ENCODE measurements at regions of chr4 and their contacts with region 1.

Region 1: GRCh38 chr4:39977489-39978377 is at the start of gene PDS5A:
- DNase-seq: peak; percentile 76 to 96 (median 87)
- ATAC-seq: peak; percentile 83
- H3K4me3 ChIP-seq: peak within 1 kb of the TSS; percentile 76 to 77
- H3K4me3 Mint-ChIP-seq: peak within 1 kb of the TSS; percentile 90
- H3K27ac ChIP-seq: peak within 1 kb of the TSS; percentile 80 to 81
- H3K27ac Mint-ChIP-seq: peak within 1 kb of the TSS; percentile 95
- H3K4me1 ChIP-seq: peaks cover 31% of the 10 kb centered on the region
- H3K4me1 Mint-ChIP-seq: peaks cover 30% of the 10 kb centered on the region
- H3K27me3 ChIP-seq: no peaks in the 10 kb centered on the region
- H3K27me3 Mint-ChIP-seq: no peaks in the 10 kb centered on the region
- CTCF ChIP-seq: peak; percentile 79
- total RNA-seq, gene PDS5A: 75.5 to 84.0 TPM

Region 2: GRCh38 chr4:39181905-39182638 is 795.7 kb before region 1 on chr4 and contains the start of gene WDR19:
- CTCF ChIA-PET with region 1: no interaction called
- POLR2A ChIA-PET with region 1: no interaction called
- intact Hi-C with region 1: loop called in 1 of 2 experiments (anchors 10 kb)
- DNase-seq: peak; percentile 97 to 100 (median 98)
- ATAC-seq: peak; percentile 93
- H3K4me3 ChIP-seq: peak within 1 kb of the TSS; percentile 82 to 92
- H3K4me3 Mint-ChIP-seq: peak within 1 kb of the TSS; percentile 43
- H3K27ac ChIP-seq: peak within 1 kb of the TSS; percentile 56 to 63
- H3K27ac Mint-ChIP-seq: no peak within 1 kb of the TSS
- H3K4me1 ChIP-seq: peaks cover 10% of the 10 kb centered on the region
- H3K4me1 Mint-ChIP-seq: peaks cover 6% of the 10 kb centered on the region
- H3K27me3 ChIP-seq: peaks cover 0 to 2% of the 10 kb centered on the region in 2 experiments
- H3K27me3 Mint-ChIP-seq: peaks cover 4% of the 10 kb centered on the region
- CTCF ChIP-seq: peak; percentile 64
- total RNA-seq, gene WDR19: 10.8 to 11.9 TPM

Region 3: GRCh38 chr4:39469429-39470077 is 508.2 kb before region 1 on chr4:
- CTCF ChIA-PET with region 1: interaction called, 15 read pairs
- POLR2A ChIA-PET with region 1: interaction called, 3 read pairs
- intact Hi-C with region 1: loop called (anchors 1 kb)
- DNase-seq: peak in 2 of 9 experiments; percentile 55 to 72
- ATAC-seq: peak; percentile 93
- H3K4me3 ChIP-seq: no peak overlapping the region
- H3K4me3 Mint-ChIP-seq: no peak overlapping the region
- H3K27ac ChIP-seq: no peak overlapping the region
- H3K27ac Mint-ChIP-seq: no peak overlapping the region
- H3K4me1 ChIP-seq: no peaks in the 10 kb centered on the region
- H3K4me1 Mint-ChIP-seq: peaks cover 4% of the 10 kb centered on the region
- H3K27me3 ChIP-seq: no peaks in the 10 kb centered on the region
- H3K27me3 Mint-ChIP-seq: no peaks in the 10 kb centered on the region
- CTCF ChIP-seq: peak; percentile 82

Region 4: GRCh38 chr4:39697740-39698423 is 279.9 kb before region 1 on chr4 and contains the start of gene UBE2K:
- CTCF ChIA-PET with region 1: interaction called, 9 read pairs
- POLR2A ChIA-PET with region 1: interaction called, 5 read pairs
- intact Hi-C with region 1: loop called (anchors 1 kb)
- DNase-seq: peak; percentile 73 to 95 (median 87)
- ATAC-seq: peak; percentile 82
- H3K4me3 ChIP-seq: peak within 1 kb of the TSS; percentile 97 to 100
- H3K4me3 Mint-ChIP-seq: peak within 1 kb of the TSS; percentile 99
- H3K27ac ChIP-seq: peak within 1 kb of the TSS; percentile 85 to 95
- H3K27ac Mint-ChIP-seq: peak within 1 kb of the TSS; percentile 99
- H3K4me1 ChIP-seq: peaks cover 39% of the 10 kb centered on the region
- H3K4me1 Mint-ChIP-seq: peaks cover 44% of the 10 kb centered on the region
- H3K27me3 ChIP-seq: no peaks in the 10 kb centered on the region
- H3K27me3 Mint-ChIP-seq: no peaks in the 10 kb centered on the region
- CTCF ChIP-seq: no peak
- total RNA-seq, gene UBE2K: 33.1 to 35.8 TPM

Region 5: DNA sequence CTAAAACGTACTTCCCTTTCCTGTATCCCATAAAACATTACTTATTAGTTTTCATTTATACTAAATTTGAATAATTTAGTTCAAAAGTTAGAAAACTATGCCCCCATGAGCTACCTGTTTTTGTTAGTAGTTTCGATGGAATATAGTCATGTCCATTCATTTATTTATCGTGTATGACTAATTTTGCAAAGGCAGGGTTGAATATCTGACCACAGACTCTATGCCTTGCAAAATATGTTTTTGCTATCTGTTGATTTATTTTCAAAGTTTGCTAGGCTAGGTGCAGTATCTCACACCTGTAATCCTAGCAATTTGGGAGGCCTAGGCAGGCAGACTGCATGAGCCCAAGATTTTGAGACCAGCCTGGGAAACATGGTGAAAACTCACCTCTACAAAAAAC is 78.4 kb before region 1 on chr4:
- CTCF ChIA-PET with region 1: interaction called, 4 read pairs
- POLR2A ChIA-PET with region 1: no interaction called
- intact Hi-C with region 1: loop called in 1 of 2 experiments (anchors 5 kb)
- DNase-seq: no peak
- ATAC-seq: no peak
- H3K4me3 ChIP-seq: no peak overlapping the region
- H3K4me3 Mint-ChIP-seq: no peak overlapping the region
- H3K27ac ChIP-seq: no peak overlapping the region
- H3K27ac Mint-ChIP-seq: no peak overlapping the region
- H3K4me1 ChIP-seq: no peaks in the 10 kb centered on the region
- H3K4me1 Mint-ChIP-seq: no peaks in the 10 kb centered on the region
- H3K27me3 ChIP-seq: no peaks in the 10 kb centered on the region
- H3K27me3 Mint-ChIP-seq: no peaks in the 10 kb centered on the region
- CTCF ChIP-seq: no peak

Region 6: GRCh38 chr4:40199999-40200874 is 222.5 kb after region 1 on chr4:
- CTCF ChIA-PET with region 1: no interaction called
- POLR2A ChIA-PET with region 1: no interaction called
- intact Hi-C with region 1: loop called in 1 of 2 experiments (anchors 5 kb)
- DNase-seq: peak in 7 of 9 experiments; percentile 41 to 88 (median 67)
- ATAC-seq: peak; percentile 24
- H3K4me3 ChIP-seq: peak overlapping the region; percentile 83 to 87
- H3K4me3 Mint-ChIP-seq: peak overlapping the region; percentile 100
- H3K27ac ChIP-seq: peak overlapping the region; percentile 89 to 96
- H3K27ac Mint-ChIP-seq: peak overlapping the region; percentile 100
- H3K4me1 ChIP-seq: peaks cover 25% of the 10 kb centered on the region
- H3K4me1 Mint-ChIP-seq: peaks cover 41% of the 10 kb centered on the region
- H3K27me3 ChIP-seq: no peaks in the 10 kb centered on the region
- H3K27me3 Mint-ChIP-seq: no peaks in the 10 kb centered on the region
- CTCF ChIP-seq: no peak